MCF 10A (cell line): ENCODE measurements at regions of chr13 and their contacts with region 1.

Region 1: DNA sequence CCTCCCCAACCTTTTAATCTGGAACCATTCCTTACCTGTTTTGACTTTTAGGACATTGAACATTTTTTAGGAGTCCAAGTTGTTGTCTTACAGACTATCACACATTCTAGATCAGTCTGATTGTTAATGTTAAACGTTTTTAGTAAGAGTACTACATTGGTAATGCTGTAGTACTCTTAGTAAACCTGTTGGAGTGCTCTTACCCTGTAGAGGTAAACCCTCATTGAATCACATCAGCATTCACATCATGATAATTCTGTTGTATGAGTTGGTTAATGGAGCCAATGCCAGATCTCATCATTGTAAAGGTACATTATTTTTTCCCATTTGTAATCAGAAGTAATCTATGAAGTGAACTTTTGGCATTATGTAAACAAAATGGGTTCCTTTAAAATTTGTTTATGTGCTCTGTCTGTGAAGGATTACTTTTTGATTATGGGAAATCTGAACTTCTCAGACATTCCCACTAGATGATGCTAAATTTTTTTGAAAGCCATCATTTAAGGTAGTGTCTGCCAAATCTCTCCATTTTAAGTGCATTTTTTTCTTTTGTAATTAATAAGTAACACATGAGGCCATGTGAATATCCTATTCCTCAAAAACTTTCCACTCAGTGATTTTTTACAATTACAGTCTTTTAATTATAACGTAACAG is 55.2 kb downstream of the VWA8 start:
- DNase-seq: peak; percentile 65
- H3K4me3 Mint-ChIP-seq: no peak overlapping the region
- H3K27ac Mint-ChIP-seq: peak overlapping the region; percentile 7
- H3K4me1 Mint-ChIP-seq: peaks cover 10% of the 10 kb centered on the region
- H3K27me3 Mint-ChIP-seq: no peaks in the 10 kb centered on the region
- CTCF ChIP-seq: peak; percentile 66

Region 2: GRCh38 chr13:41746259-41746658 is 159.5 kb before region 1 on chr13:
- CTCF ChIA-PET with region 1: no interaction called
- POLR2A ChIA-PET with region 1: no interaction called
- intact Hi-C with region 1: no loop called
- DNase-seq: peak; percentile 59
- H3K4me3 Mint-ChIP-seq: no peak overlapping the region
- H3K27ac Mint-ChIP-seq: no peak overlapping the region
- H3K4me1 Mint-ChIP-seq: peaks cover 9% of the 10 kb centered on the region
- H3K27me3 Mint-ChIP-seq: no peaks in the 10 kb centered on the region
- CTCF ChIP-seq: no peak

Region 3: GRCh38 chr13:42215578-42216421 is 310.1 kb after region 1 on chr13:
- CTCF ChIA-PET with region 1: no interaction called
- POLR2A ChIA-PET with region 1: no interaction called
- intact Hi-C with region 1: loop called (anchors 10 kb)
- DNase-seq: peak; percentile 49
- H3K4me3 Mint-ChIP-seq: no peak overlapping the region
- H3K27ac Mint-ChIP-seq: no peak overlapping the region
- H3K4me1 Mint-ChIP-seq: peaks cover 24% of the 10 kb centered on the region
- H3K27me3 Mint-ChIP-seq: no peaks in the 10 kb centered on the region
- CTCF ChIP-seq: peak; percentile 47

Region 4: DNA sequence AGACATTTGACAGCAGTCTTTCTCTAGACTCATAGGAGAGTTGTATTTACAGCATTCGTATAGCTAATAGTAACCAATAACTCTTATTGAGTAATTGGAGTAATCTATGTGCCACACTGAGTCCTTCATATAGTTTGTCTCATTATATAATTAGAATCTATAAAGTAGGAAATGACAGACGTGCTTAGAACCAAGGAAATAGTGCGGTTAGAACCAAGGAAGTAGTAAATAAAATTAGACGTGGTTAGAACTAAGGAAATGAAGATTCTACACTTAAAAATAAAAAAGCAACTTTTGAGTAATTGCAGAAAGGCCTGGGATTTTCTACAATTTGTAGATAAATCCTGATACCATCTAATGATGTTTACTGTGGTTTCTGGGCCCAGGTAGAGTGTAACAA is 560.4 kb after region 1 on chr13:
- CTCF ChIA-PET with region 1: no interaction called
- POLR2A ChIA-PET with region 1: no interaction called
- intact Hi-C with region 1: no loop called
- DNase-seq: no peak
- H3K4me3 Mint-ChIP-seq: no peak overlapping the region
- H3K27ac Mint-ChIP-seq: no peak overlapping the region
- H3K4me1 Mint-ChIP-seq: no peaks in the 10 kb centered on the region
- H3K27me3 Mint-ChIP-seq: no peaks in the 10 kb centered on the region
- CTCF ChIP-seq: no peak

Region 5: GRCh38 chr13:42728507-42729180 is 822.9 kb after region 1 on chr13:
- CTCF ChIA-PET with region 1: no interaction called
- POLR2A ChIA-PET with region 1: no interaction called
- intact Hi-C with region 1: no loop called
- DNase-seq: peak; percentile 70
- H3K4me3 Mint-ChIP-seq: no peak overlapping the region
- H3K27ac Mint-ChIP-seq: no peak overlapping the region
- H3K4me1 Mint-ChIP-seq: peaks cover 6% of the 10 kb centered on the region
- H3K27me3 Mint-ChIP-seq: no peaks in the 10 kb centered on the region
- CTCF ChIP-seq: no peak